CD4-positive, alpha-beta memory T cell (primary cell): ENCODE measurements at regions of chr2 and their contacts with region 1.

Region 1: GRCh38 chr2:230864598-230865306 is at the start of gene ITM2C:
- DNase-seq: peak; percentile 71 to 81 (median 74)
- H3K4me3 ChIP-seq: peak within 1 kb of the TSS; percentile 34 to 70
- H3K4me3 Mint-ChIP-seq: peak within 1 kb of the TSS; percentile 86 to 97 (median 93)
- H3K27ac ChIP-seq: peak within 1 kb of the TSS; percentile 45
- H3K27ac Mint-ChIP-seq: peak within 1 kb of the TSS; percentile 78 to 97 (median 88)
- H3K4me1 ChIP-seq: peaks cover 39% of the 10 kb centered on the region
- H3K4me1 Mint-ChIP-seq: peaks cover 19 to 67% (median 41%) of the 10 kb centered on the region in 4 donors
- H3K27me3 ChIP-seq: no peaks in the 10 kb centered on the region
- H3K27me3 Mint-ChIP-seq: peaks cover 0 to 2% of the 10 kb centered on the region in 2 donors
- total RNA-seq, gene ITM2C: 24.1 to 24.3 TPM

Region 2: DNA sequence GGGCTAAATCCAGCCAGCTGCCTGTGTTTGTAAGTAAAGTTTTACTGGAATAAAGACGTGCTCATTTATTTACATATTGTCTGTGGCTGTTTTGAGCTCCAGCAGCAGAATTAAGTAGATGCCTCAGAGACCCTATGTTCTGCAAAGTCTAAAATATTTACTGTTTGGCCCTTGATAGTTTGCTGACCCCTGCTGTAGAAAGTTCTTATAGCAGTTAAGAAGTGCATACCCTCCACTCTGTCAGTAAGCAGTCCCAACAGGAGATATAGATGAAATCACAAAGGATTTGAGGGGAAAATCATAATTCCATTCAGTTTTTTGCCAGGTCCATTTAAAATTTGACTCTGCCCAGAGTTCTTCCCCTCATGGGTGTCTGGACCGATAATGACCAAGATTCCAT is 50.1 kb before region 1 on chr2:
- CTCF ChIA-PET with region 1: no interaction called
- POLR2A ChIA-PET with region 1: no interaction called
- intact Hi-C with region 1: no loop called
- DNase-seq: no peak
- H3K4me3 ChIP-seq: no peak overlapping the region
- H3K4me3 Mint-ChIP-seq: no peak overlapping the region
- H3K27ac ChIP-seq: no peak overlapping the region
- H3K27ac Mint-ChIP-seq: peak overlapping the region in 3 of 7 donors; percentile 25 to 64 (median 51)
- H3K4me1 ChIP-seq: no peaks in the 10 kb centered on the region
- H3K4me1 Mint-ChIP-seq: peaks cover 5 to 20% (median 13%) of the 10 kb centered on the region in 4 donors
- H3K27me3 ChIP-seq: no peaks in the 10 kb centered on the region
- H3K27me3 Mint-ChIP-seq: no peaks in the 10 kb centered on the region

Region 3: DNA sequence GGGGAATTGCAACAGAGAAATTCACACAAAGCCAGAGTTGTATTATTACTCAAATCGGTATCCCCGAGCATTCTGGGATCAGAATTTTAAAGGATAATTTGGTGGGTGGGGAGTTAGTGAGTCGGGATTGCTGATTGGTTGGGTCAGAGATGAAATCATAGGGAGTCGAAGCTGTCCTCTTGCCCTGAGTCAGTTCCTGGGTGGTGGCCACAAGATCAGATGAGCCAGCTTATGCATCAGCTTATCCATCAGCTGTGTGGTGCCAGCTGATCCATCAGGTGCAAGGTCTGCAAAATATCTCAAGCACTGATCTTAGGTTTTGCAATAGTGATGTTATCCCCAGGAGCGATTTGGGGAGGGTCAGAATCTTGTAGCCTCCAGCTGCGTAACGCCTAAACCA is 34.3 kb before region 1 on chr2:
- CTCF ChIA-PET with region 1: no interaction called
- POLR2A ChIA-PET with region 1: no interaction called
- intact Hi-C with region 1: no loop called
- DNase-seq: no peak
- H3K4me3 ChIP-seq: no peak overlapping the region
- H3K4me3 Mint-ChIP-seq: no peak overlapping the region
- H3K27ac ChIP-seq: no peak overlapping the region
- H3K27ac Mint-ChIP-seq: no peak overlapping the region
- H3K4me1 ChIP-seq: peaks cover 8% of the 10 kb centered on the region
- H3K4me1 Mint-ChIP-seq: peaks cover 2 to 9% (median 3%) of the 10 kb centered on the region in 4 donors
- H3K27me3 ChIP-seq: no peaks in the 10 kb centered on the region
- H3K27me3 Mint-ChIP-seq: peaks cover 30 to 34% of the 10 kb centered on the region in 2 donors

Region 4: DNA sequence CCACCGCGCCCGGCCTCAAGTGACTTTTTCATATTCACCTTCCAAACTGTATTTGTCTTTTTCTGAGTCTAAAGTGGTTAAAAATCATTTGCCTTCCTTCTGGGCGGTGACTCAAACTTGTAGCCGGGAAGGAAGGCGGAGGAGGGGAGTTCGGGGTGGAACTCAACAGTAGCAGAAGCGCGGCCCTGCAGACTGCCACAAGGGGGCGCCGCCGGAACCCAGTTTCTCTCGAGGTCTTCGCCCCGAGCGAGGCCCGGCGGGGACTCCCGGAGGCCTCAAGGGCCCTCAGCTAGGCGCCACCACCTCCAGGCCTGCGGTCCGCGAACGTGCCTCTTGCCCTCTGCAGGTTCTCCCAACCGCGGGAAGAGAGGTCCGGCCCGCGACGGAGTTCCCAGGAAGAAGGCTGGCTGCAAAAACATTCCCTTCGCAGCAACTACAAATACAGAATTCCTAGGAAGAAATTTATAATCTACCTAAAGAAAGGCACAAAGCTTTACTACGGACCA is 16.8 kb before region 1 on chr2:
- CTCF ChIA-PET with region 1: interaction called, 10 read pairs
- POLR2A ChIA-PET with region 1: interaction called, 3 read pairs
- intact Hi-C with region 1: loop called (anchors 2 kb)
- DNase-seq: peak; percentile 74 to 82 (median 76)
- H3K4me3 ChIP-seq: no peak overlapping the region
- H3K4me3 Mint-ChIP-seq: peak overlapping the region in 6 of 8 donors; percentile 36 to 79 (median 50)
- H3K27ac ChIP-seq: no peak overlapping the region
- H3K27ac Mint-ChIP-seq: peak overlapping the region in 2 of 7 donors; percentile 27
- H3K4me1 ChIP-seq: peaks cover 8% of the 10 kb centered on the region
- H3K4me1 Mint-ChIP-seq: peaks cover 5 to 10% (median 7%) of the 10 kb centered on the region in 4 donors
- H3K27me3 ChIP-seq: no peaks in the 10 kb centered on the region
- H3K27me3 Mint-ChIP-seq: peaks cover 19 to 20% of the 10 kb centered on the region in 2 donors

Region 5: DNA sequence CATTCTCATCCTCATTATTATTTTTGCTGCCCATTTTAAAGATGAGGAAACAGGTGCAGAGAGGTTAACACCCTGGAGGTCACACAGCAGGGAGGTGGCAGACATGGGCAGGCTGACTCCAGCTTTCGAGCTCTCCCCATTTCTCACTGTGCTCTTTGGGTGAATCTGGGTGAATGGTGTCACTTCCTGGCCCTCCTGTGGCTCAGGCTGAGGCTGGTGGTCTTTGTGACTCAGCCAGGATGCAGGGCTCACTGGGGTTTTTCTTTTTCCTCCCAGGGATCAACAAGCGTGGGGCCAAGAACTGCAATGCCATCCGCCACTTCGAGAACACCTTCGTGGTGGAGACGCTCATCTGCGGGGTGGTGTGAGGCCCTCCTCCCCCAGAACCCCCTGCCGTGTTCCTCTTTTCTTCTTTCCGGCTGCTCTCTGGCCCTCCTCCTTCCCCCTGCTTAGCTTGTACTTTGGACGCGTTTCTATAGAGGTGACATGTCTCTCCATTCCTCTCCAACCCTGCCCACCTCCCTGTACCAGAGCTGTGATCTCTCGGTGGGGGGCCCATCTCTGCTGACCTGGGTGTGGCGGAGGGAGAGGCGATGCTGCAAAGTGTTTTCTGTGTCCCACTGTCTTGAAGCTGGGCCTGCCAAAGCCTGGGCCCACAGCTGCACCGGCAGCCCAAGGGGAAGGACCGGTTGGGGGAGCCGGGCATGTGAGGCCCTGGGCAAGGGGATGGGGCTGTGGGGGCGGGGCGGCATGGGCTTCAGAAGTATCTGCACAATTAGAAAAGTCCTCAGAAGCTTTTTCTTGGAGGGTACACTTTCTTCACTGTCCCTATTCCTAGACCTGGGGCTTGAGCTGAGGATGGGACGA is 13.2 kb after region 1 on chr2:
- CTCF ChIA-PET with region 1: interaction called, 6 read pairs
- POLR2A ChIA-PET with region 1: interaction called, 12 read pairs
- intact Hi-C with region 1: no loop called
- DNase-seq: peak in 4 of 5 donors; percentile 32 to 77 (median 40)
- H3K4me3 ChIP-seq: no peak overlapping the region
- H3K4me3 Mint-ChIP-seq: peak overlapping the region in 2 of 8 donors; percentile 30 to 57
- H3K27ac ChIP-seq: no peak overlapping the region
- H3K27ac Mint-ChIP-seq: peak overlapping the region in 4 of 7 donors; percentile 26 to 82 (median 68)
- H3K4me1 ChIP-seq: peaks cover 15% of the 10 kb centered on the region
- H3K4me1 Mint-ChIP-seq: peaks cover 2 to 29% (median 17%) of the 10 kb centered on the region in 4 donors
- H3K27me3 ChIP-seq: no peaks in the 10 kb centered on the region
- H3K27me3 Mint-ChIP-seq: no peaks in the 10 kb centered on the region

Region 6: DNA sequence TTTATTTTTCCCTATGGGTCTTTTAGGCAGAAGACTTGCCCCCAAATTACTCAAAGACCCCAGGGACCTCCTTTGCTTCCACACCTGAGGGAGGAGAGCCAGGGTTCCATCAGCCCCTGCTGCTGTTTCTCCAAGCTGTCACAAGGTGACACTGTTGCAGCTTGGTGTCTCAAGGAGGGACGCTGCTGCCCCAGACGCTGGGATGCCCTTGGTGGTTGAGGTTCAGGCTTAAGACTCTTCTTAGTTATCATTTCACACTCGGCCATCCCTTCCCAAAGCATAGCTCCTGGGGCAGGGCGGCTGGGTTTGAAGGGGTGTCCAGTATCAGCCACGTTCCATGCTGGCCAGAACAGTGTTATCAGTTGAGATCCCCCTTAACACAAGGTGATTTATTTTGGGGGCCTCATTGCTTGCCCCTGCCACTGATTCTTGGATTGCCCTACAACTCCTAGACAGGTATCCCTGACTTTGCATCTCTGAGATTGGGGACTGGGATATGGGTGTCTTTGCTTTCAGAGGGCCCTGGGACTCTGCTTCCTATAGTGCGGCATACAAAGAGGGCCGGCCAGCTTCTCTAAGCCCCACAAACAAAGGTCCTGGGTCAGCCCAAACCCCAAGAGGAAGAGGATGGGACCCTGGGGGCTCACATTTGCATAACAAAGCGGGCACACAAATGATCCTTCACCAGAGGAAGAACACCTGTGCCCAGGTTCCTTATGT is 37.6 kb after region 1 on chr2:
- CTCF ChIA-PET with region 1: interaction called, 3 read pairs
- POLR2A ChIA-PET with region 1: no interaction called
- intact Hi-C with region 1: loop called (anchors 2 kb)
- DNase-seq: peak in 4 of 5 donors; percentile 33 to 54 (median 38)
- H3K4me3 ChIP-seq: no peak overlapping the region
- H3K4me3 Mint-ChIP-seq: no peak overlapping the region
- H3K27ac ChIP-seq: no peak overlapping the region
- H3K27ac Mint-ChIP-seq: no peak overlapping the region
- H3K4me1 ChIP-seq: peaks cover 17% of the 10 kb centered on the region
- H3K4me1 Mint-ChIP-seq: peaks cover 7 to 23% (median 18%) of the 10 kb centered on the region in 4 donors
- H3K27me3 ChIP-seq: no peaks in the 10 kb centered on the region
- H3K27me3 Mint-ChIP-seq: peaks cover 5 to 7% of the 10 kb centered on the region in 2 donors

Region 7: DNA sequence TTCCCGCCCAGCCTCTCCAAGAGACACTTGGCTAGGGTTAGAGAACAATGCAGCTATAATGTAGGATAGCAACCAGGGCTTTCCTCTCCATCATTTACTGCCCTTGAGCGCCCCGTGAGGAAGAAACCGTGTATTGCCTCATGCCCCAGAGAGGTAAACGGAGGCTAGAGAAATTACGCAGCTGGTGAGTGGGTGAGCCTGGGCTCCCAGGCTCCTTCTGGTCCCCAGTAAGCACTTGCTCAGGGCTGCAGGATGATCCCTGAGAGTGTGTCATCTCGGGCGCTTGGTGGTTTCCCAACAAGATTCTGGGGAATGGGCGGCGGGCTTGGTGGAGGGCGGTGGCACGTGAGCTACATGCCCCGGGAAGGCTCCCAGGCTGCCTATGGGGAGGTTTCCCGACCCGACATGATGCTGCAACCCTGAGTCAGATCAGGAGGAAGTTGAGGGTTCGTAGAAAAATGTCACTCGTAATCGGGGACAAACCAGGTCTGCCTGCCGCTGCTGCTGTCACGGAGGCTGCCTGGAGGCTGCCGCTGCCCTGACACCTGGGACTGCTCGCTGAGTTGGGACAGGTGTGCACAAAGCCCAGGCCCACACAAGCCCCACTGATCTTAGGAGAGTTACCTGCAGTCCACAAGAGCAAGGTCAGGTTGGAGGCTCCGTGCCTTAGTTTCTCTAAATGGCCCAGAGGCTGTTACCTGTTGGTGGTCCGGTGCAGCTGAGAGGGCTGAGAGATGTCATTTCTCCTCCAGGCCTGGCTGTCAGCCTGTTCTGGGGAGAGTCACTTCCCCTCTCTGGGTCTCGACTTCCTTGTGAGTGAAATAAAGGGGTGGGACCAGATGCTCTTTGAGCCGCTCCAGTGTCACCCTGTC is 60.0 kb after region 1 on chr2 and contains the start of gene GPR55:
- CTCF ChIA-PET with region 1: interaction called, 3 read pairs
- POLR2A ChIA-PET with region 1: interaction called, 5 read pairs
- intact Hi-C with region 1: loop called (anchors 1 kb)
- DNase-seq: peak; percentile 39 to 56 (median 53)
- H3K4me3 ChIP-seq: peak within 1 kb of the TSS; percentile 52 to 66
- H3K4me3 Mint-ChIP-seq: peak within 1 kb of the TSS; percentile 86 to 96 (median 92)
- H3K27ac ChIP-seq: peak within 1 kb of the TSS; percentile 40
- H3K27ac Mint-ChIP-seq: peak within 1 kb of the TSS; percentile 77 to 91 (median 84)
- H3K4me1 ChIP-seq: peaks cover 24% of the 10 kb centered on the region
- H3K4me1 Mint-ChIP-seq: peaks cover 24 to 53% (median 30%) of the 10 kb centered on the region in 4 donors
- H3K27me3 ChIP-seq: no peaks in the 10 kb centered on the region
- H3K27me3 Mint-ChIP-seq: peaks cover 2% of the 10 kb centered on the region in 2 donors
- total RNA-seq, gene GPR55: 8.1 to 8.3 TPM

Region 8: DNA sequence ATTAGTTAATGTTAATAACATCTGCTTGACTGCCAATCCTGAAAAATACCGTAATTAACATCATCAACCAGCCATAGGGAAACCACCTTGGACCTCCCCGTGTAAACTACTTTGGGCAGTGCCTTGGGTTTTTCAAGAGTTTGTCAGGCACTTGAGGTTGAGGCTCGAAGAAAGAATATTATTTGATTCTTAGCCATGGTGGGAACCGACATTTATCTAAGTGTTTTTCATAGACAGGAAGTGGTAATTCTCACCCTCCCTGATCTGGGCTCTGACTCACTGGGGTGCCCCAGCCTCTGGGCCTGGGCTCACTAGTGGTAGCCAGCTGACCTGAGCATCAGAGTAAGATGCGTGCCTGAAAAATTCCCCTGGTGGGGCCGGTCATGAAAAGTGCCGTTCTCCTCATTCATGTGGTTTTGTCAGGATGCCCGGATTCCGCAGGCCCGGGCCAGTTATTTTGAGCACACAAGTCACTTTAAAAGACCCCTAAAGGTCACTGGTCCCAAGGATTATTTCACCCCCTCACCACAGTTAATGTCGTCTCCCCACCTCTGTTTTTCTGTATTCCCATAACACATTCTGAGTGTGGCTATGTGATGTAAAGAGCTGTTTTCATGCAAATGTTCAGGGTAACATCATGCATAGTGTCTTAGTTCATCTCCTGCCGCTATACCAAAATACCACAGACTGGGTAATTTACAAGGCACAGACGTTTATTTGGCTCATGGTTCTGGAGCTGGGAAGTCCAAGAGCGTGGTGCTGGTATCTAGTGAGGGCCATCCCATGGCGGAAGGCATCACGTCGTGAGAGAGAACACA is 109.6 kb after region 1 on chr2:
- CTCF ChIA-PET with region 1: no interaction called
- POLR2A ChIA-PET with region 1: interaction called, 4 read pairs
- intact Hi-C with region 1: loop called (anchors 10 kb)
- DNase-seq: peak; percentile 69 to 90 (median 72)
- H3K4me3 ChIP-seq: peak overlapping the region in 1 of 2 donors; percentile 25
- H3K4me3 Mint-ChIP-seq: peak overlapping the region; percentile 40 to 75 (median 64)
- H3K27ac ChIP-seq: peak overlapping the region; percentile 73
- H3K27ac Mint-ChIP-seq: peak overlapping the region; percentile 78 to 99 (median 93)
- H3K4me1 ChIP-seq: peaks cover 33% of the 10 kb centered on the region
- H3K4me1 Mint-ChIP-seq: peaks cover 35 to 65% (median 47%) of the 10 kb centered on the region in 4 donors
- H3K27me3 ChIP-seq: no peaks in the 10 kb centered on the region
- H3K27me3 Mint-ChIP-seq: no peaks in the 10 kb centered on the region